Left lung (tissue), 14 donors: ENCODE measurements at regions of chr2 and their contacts with region 1.

Region 1: GRCh38 chr2:13006829-13007717 is 290.3 kb downstream of the TRIB2 start:
- DNase-seq: peak in 3 of 4 donors; percentile 39 to 82 (median 75)
- ATAC-seq: peak; percentile 95
- H3K4me3 ChIP-seq: no peak overlapping the region
- H3K27ac ChIP-seq: no peak overlapping the region
- H3K4me1 ChIP-seq: peaks cover 0 to 12% of the 10 kb centered on the region in 2 donors
- H3K27me3 ChIP-seq: no peaks in the 10 kb centered on the region
- CTCF ChIP-seq: peak; percentile 73 to 87

Region 2: GRCh38 chr2:11829947-11830707 is 1176.9 kb before region 1 on chr2:
- intact Hi-C with region 1: loop called in 1 of 2 experiments (anchors 5 kb)
- DNase-seq: peak; percentile 77 to 89 (median 80)
- ATAC-seq: peak; percentile 95
- H3K4me3 ChIP-seq: peak overlapping the region; percentile 8 to 12
- H3K27ac ChIP-seq: peak overlapping the region; percentile 81 to 82
- H3K4me1 ChIP-seq: peaks cover 9 to 32% of the 10 kb centered on the region in 2 donors
- H3K27me3 ChIP-seq: peaks cover 0 to 10% of the 10 kb centered on the region in 2 donors
- CTCF ChIP-seq: peak in 1 of 2 donors; percentile 7

Region 3: DNA sequence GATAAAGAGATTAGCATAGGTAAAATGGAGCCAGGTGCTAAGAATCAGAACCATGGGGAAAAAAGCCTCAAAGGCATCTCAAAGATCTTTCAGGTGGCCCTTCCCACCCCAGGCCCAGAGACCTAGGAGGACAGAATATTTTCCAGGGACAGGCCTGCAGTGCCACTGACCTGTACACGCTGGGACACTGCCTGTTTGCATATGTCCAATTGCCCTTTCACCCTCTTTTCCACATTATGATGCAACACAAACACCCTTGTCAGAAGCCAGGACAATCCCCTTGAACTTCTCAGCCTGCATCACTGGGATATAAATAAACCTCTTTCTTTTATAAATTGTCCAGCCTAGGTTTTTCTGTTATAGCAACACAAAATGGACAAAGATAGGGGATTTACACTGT is 128.8 kb after region 1 on chr2:
- intact Hi-C with region 1: no loop called
- DNase-seq: peak in 1 of 4 donors; percentile 8
- ATAC-seq: no peak
- H3K4me3 ChIP-seq: no peak overlapping the region
- H3K27ac ChIP-seq: no peak overlapping the region
- H3K4me1 ChIP-seq: no peaks in the 10 kb centered on the region
- H3K27me3 ChIP-seq: no peaks in the 10 kb centered on the region
- CTCF ChIP-seq: no peak

Region 4: GRCh38 chr2:13698449-13699246 is 691.6 kb after region 1 on chr2:
- intact Hi-C with region 1: no loop called
- DNase-seq: no peak
- ATAC-seq: no peak
- H3K4me3 ChIP-seq: no peak overlapping the region
- H3K27ac ChIP-seq: no peak overlapping the region
- H3K4me1 ChIP-seq: no peaks in the 10 kb centered on the region
- H3K27me3 ChIP-seq: no peaks in the 10 kb centered on the region
- CTCF ChIP-seq: no peak